ENCODE measurements at regions of chr11 and their contacts with region 1.

Region 1: DNA sequence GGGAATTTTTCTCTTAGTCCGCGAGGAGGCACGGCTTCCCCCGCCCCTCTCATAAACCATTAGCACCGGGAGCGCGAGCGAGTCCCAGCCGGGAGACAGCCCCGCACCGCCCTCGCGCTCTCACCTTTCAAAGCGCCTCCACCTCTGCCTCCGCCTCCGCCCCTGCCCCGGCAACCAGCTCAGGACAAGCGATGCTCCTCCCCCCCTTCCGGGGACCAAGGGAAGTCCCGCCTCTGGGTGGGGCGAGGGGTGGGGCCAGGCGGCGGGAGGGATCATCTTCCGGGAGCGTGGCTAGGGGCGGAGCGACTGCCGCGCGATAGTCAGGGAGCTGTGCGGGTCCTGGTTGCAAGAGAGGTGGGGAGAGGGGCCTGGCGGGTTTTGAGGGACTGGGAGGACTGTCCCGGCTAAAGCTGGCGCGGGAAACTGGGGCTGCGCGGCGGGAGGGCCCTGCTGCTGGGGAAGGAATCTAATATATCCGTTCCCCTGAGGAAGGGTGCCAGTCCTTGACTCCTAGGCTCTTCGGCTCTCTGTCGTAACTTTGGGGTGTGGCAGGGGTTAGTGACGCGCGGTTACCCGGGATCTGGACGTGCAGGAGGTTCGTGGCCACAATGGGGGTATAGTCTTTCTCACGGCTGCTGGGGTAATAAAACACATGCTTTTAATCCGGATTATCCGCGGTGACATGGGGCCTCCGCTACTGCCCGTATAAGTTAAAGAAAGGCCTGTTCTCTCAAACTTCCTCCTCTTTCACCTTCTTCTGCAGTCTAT is at the starts of genes CCDC82 and JRKL:
- DNase-seq: peak; percentile 71
- H3K4me3 ChIP-seq: peak within 1 kb of the TSS; percentile 82
- CTCF ChIP-seq: no peak

Region 2: DNA sequence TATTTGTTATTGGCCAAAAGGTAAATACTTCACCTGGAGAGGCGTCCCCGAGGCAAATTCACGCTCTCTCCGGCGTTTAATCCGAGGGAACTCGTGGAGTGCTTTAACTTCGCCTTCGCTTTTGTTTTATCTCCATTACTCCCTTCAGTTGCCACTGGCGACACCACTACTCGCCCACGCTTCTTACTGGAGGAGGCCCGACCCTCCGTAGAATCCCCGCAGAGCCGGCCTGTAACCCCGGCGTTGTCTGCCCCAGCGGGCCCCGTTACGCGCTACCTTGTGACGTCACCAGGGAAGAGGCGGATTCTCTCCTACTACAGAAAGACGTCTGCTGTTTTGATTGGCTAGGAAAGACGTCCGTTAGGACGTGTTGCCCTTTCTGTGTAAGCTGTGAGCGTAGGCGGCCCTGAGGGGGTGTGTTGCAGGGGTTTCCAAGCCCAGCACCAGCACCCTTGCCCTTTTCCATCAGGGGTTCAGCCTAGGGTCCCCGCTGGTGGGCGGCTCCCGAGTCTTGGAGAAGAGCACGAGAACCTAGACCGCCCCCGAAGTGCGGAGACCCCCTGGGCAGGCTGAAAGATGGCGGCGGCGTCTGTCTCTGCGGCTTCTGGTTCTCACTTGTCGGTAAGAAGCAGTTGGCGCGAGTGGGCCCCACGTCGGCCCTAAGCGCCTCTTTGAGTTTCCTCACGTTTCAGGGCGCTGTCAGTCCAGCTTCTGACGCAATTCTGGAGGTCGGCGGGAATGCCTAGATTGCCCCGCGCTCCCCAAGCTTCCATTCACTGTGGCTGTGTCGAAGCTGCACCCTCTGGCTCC is 599.6 kb before region 1 on chr11 and contains the start of gene CEP57:
- CTCF ChIA-PET with region 1: interaction called, 17 read pairs
- POLR2A ChIA-PET with region 1: interaction called, 3 read pairs
- DNase-seq: peak; percentile 94
- H3K4me3 ChIP-seq: peak within 1 kb of the TSS; percentile 85
- CTCF ChIP-seq: no peak

Region 3: DNA sequence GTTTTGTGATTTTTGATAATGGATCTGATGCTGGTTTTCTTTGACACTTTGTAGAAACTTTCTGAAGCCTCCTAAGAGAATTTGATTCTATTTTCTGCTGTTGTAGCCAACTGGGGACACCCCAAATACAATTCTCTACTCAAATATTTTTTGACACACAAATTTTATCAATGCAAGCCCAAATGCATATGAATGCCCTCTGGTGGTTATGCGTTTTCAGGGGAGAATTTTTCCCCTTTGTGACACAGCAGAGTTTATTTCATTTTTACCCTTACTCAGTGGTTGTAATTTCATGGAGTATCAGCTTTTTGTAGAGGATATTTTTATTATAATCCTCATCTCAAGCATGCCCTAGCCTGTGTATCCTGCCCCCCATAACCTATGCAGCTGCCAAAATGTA is 421.3 kb before region 1 on chr11:
- CTCF ChIA-PET with region 1: interaction called, 13 read pairs
- POLR2A ChIA-PET with region 1: no interaction called
- DNase-seq: no peak
- H3K4me3 ChIP-seq: no peak overlapping the region
- CTCF ChIP-seq: peak; percentile 10

Region 4: GRCh38 chr11:96841792-96842191 is 451.9 kb after region 1 on chr11:
- CTCF ChIA-PET with region 1: no interaction called
- POLR2A ChIA-PET with region 1: no interaction called
- DNase-seq: no peak
- H3K4me3 ChIP-seq: no peak overlapping the region
- CTCF ChIP-seq: no peak